T-cell (primary cell): ENCODE measurements at regions of chr6 and their contacts with region 1.

Region 1: DNA sequence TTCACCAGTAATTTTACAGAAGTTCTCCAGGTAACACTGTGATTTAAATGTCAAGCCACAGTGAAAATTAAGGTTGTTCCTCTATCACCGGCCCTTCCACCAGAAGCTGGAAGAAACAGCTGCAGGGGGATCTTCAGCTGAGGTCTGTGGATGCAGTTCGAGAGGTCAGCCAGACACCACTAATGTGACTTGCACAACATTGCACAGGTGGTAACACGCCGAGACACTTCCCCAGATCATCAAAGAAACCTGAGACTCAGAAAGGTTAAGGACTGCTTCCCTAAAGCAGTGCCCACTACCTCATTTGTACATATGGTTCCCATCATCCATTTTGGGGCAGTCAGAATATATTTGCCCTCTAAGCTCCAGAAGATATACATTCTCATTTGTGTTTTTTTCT is 8.1 kb upstream of the SERPINB9 start:
- DNase-seq: no peak
- ATAC-seq: no peak
- H3K4me3 ChIP-seq: no peak overlapping the region
- H3K4me3 Mint-ChIP-seq: no peak overlapping the region
- H3K27ac ChIP-seq: no peak overlapping the region
- H3K27ac Mint-ChIP-seq: peak overlapping the region in 1 of 2 donors; percentile 22
- H3K4me1 ChIP-seq: peaks cover 0 to 3% of the 10 kb centered on the region in 2 experiments
- H3K4me1 Mint-ChIP-seq: peaks cover 31 to 46% (median 46%) of the 10 kb centered on the region in 3 donors
- H3K27me3 ChIP-seq: no peaks in the 10 kb centered on the region
- H3K27me3 Mint-ChIP-seq: no peaks in the 10 kb centered on the region

Region 2: DNA sequence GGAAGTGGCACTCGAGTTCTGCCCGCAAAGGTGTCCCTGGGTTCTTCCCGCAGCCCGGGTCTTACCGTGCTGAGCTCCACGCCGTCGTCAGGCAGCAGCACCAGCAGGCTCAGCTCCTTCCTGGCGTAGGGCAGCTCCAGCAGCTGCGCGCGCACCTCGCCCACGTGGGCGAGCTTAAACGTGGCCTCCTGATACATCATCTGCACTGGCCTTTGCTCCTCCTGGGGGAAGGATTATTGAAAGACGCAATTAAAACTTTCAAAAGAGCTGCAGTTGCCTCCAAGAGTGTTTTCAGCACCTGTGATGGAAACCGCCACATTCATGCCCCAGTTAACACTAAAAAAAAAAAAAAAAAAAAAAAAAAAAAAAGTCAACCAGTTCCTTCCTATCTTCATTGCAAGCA is 19.4 kb before region 1 on chr6:
- CTCF ChIA-PET with region 1: interaction called in 1 of 2 experiments, 14 read pairs
- POLR2A ChIA-PET with region 1: no interaction called
- DNase-seq: peak in 34 of 35 experiments; percentile 46 to 90 (median 75)
- ATAC-seq: peak; percentile 91 to 96 (median 91)
- H3K4me3 ChIP-seq: peak overlapping the region in 1 of 2 donors; percentile 5
- H3K4me3 Mint-ChIP-seq: peak overlapping the region; percentile 37 to 72 (median 53)
- H3K27ac ChIP-seq: peak overlapping the region; percentile 61
- H3K27ac Mint-ChIP-seq: peak overlapping the region; percentile 82 to 87
- H3K4me1 ChIP-seq: peaks cover 14 to 18% of the 10 kb centered on the region in 2 experiments
- H3K4me1 Mint-ChIP-seq: peaks cover 51 to 67% (median 64%) of the 10 kb centered on the region in 3 donors
- H3K27me3 ChIP-seq: no peaks in the 10 kb centered on the region
- H3K27me3 Mint-ChIP-seq: no peaks in the 10 kb centered on the region

Region 3: DNA sequence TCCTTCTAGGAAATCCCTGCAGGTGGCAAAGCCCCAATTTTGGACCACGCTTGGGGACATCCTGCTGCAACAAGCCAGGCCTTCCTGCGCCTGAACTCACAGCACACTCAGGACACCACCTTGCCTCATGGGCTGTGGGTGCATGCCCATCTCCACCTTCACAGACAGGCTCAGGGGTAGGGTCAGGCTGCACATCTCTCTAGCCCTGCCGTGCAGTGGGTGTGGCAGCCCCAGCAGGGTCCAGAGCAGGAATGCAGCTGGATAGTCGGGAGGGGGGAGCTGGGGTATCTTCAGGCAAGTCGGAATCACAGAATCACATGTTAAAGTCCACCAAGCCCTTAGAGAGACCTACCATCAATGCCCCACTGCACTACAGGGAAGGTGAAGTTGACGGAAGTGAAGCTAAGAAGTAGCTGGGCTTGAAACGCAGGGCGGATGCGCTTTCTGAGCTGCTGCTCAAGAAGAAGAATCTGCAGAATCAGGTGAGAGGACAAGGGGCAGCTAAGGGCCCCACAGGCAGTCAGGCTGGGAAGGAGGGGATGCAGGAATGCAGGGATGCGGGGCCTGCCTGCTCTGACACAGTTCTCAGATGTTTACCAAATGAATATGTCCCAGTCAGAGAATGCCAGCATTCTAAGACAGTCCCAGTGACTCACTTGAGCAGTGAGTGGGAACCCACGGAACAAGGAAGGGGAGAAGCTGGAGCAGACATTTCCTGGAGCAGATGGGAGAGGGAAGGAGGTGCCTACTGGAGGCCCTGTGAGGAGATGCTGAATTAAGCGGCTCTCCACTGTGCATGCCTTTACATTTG is 48.9 kb after region 1 on chr6:
- CTCF ChIA-PET with region 1: no interaction called
- POLR2A ChIA-PET with region 1: no interaction called
- DNase-seq: no peak
- ATAC-seq: no peak
- H3K4me3 ChIP-seq: no peak overlapping the region
- H3K4me3 Mint-ChIP-seq: no peak overlapping the region
- H3K27ac ChIP-seq: no peak overlapping the region
- H3K27ac Mint-ChIP-seq: no peak overlapping the region
- H3K4me1 ChIP-seq: peaks cover 0 to 7% of the 10 kb centered on the region in 2 experiments
- H3K4me1 Mint-ChIP-seq: peaks cover 10 to 21% (median 18%) of the 10 kb centered on the region in 3 donors
- H3K27me3 ChIP-seq: no peaks in the 10 kb centered on the region
- H3K27me3 Mint-ChIP-seq: no peaks in the 10 kb centered on the region

Region 4: GRCh38 chr6:4164117-4164442 is 1252.9 kb after region 1 on chr6:
- CTCF ChIA-PET with region 1: no interaction called
- POLR2A ChIA-PET with region 1: no interaction called
- DNase-seq: no peak
- ATAC-seq: no peak
- H3K4me3 ChIP-seq: no peak overlapping the region
- H3K4me3 Mint-ChIP-seq: no peak overlapping the region
- H3K27ac ChIP-seq: no peak overlapping the region
- H3K27ac Mint-ChIP-seq: no peak overlapping the region
- H3K4me1 ChIP-seq: no peaks in the 10 kb centered on the region
- H3K4me1 Mint-ChIP-seq: no peaks in the 10 kb centered on the region
- H3K27me3 ChIP-seq: peaks cover 0 to 5% of the 10 kb centered on the region in 2 experiments
- H3K27me3 Mint-ChIP-seq: peaks cover 0 to 4% of the 10 kb centered on the region in 2 donors